H1 (cell line): ENCODE measurements at regions of chr15 and their contacts with region 1.

Region 1: DNA sequence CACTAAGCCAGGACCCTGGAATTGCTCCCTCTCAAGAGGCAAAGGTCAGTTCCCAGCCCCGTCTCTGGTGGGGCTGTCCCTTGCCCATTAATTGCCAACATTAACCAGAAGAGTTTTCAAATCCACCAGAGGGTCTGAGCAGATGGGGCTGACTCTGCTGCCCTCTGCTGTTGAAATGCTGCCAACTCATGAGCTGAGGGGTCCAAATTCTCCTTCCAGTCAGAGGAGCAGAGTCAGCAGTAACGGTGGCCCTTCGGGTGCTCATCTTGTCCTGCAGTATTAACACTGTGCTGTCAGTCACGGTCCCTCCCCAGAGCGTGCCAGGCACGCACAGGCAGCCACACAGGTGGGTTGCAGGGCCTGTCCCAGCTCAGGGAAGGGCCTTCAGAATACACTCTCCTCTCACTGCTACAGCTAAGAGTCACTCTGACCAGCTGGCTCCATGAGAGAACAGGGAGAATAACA is 10.7 kb upstream of the SPTBN5 start:
- DNase-seq: peak; percentile 50 to 87
- H3K4me3 ChIP-seq: no peak overlapping the region
- H3K27ac ChIP-seq: no peak overlapping the region
- H3K4me1 ChIP-seq: peaks cover 0 to 4% (median 2%) of the 10 kb centered on the region in 4 experiments; a peak in 1 of 7 replicates
- H3K27me3 ChIP-seq: no peaks in the 10 kb centered on the region; a peak in 1 of 7 replicates
- CTCF ChIP-seq: peak; percentile 84 to 97 (median 96)
- EP300 ChIP-seq: no peak
- POLR2A ChIP-seq: no peak
- RAD21 ChIP-seq: peak; percentile 93 to 96

Region 2: GRCh38 chr15:41832875-41833274 is 71.7 kb before region 1 on chr15:
- CTCF ChIA-PET with region 1: interaction called, 10 read pairs
- POLR2A ChIA-PET with region 1: no interaction called
- DNase-seq: no peak
- H3K4me3 ChIP-seq: no peak overlapping the region
- H3K27ac ChIP-seq: no peak overlapping the region
- H3K4me1 ChIP-seq: peaks cover 0 to 4% (median 2%) of the 10 kb centered on the region in 4 experiments; a peak in 3 of 7 replicates
- H3K27me3 ChIP-seq: no peaks in the 10 kb centered on the region
- CTCF ChIP-seq: no peak
- EP300 ChIP-seq: no peak
- POLR2A ChIP-seq: no peak
- RAD21 ChIP-seq: no peak

Region 3: DNA sequence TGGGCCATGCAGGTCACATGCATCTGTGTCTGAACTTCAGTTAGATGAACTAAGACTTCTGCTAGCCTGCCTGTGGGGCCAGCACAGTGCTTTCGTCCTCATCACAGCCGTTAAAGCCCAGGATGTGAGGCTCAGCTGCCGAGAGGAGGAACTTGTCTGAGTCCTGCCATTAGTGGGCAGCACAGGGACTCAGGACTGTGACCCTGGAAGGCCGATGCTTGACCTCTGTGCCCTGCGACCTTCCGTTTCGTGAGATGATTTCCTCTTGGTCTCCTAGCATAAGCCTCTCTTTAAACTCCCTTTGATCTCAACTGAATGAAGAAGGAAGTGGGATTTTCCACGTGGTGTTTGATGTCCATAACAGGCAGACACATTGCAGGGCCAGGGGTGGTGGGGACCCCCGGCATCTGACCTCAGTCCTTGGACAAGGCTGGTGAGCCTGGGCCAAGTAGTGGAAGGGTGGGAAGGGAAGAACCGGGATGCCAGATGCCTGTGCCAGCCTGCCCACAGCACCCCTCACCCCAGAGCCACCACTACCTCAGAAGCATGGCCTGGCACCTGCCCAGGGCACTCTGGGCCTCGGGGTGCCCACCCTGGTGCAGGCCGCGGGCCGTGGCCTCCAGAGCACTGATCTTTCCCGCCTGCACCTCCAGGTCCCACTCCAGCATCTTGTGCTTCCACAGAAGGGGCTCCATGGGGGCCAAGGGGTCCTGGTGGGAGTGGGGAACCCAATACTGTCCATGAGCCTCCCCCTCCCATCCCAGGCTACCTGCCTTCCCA is 44.3 kb before region 1 on chr15:
- CTCF ChIA-PET with region 1: interaction called, 49 read pairs
- POLR2A ChIA-PET with region 1: no interaction called
- DNase-seq: no peak
- H3K4me3 ChIP-seq: no peak overlapping the region
- H3K27ac ChIP-seq: no peak overlapping the region
- H3K4me1 ChIP-seq: peaks cover 0 to 13% (median 3%) of the 10 kb centered on the region in 4 experiments; a peak in 4 of 7 replicates
- H3K27me3 ChIP-seq: no peaks in the 10 kb centered on the region; a peak in 3 of 7 replicates
- CTCF ChIP-seq: peak in 1 of 3 experiments; percentile 42; a peak in 1 of 4 replicates
- EP300 ChIP-seq: no peak
- POLR2A ChIP-seq: no peak
- RAD21 ChIP-seq: peak in 1 of 2 experiments; percentile 32; a peak in 1 of 4 replicates

Region 4: DNA sequence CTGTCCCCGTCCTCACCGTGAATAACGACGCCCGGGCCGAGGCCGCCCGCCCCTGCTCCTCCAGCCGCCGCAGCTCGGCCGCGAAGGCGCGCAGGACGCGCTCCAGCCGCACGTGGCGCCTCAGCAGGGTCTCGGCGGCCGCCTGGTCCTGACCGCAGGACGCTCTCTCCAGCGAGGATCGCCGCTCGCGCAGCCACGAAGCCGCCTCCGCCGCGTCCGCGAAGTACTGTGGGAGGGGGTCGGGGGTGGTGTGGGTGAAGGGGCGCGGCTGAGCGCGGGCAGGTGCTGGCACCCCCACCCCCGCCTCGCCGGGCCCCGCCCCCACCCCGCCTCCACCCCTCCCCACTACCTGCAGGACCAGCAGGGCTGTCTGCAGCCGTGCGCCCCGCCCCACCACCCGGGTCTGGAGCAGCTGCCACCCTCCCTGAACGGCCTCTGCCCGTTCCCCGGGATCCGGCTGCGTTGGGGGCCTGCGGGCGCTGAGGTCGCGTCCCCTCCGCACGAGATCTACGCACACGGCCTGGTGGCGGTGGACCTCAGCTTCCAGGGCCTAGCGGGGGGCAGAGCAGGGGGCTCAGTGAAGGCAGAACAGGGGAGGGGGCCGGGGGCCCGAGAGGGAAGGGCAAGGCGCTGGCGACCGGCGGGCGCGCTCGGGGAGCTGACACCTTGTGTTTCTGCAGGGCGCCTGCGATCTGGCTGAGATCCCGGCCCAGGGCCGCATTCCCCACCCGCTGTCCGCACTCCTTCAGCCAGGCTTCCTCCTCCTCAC is 22.5 kb before region 1 on chr15:
- CTCF ChIA-PET with region 1: interaction called, 58 read pairs
- POLR2A ChIA-PET with region 1: no interaction called
- DNase-seq: peak in 1 of 2 experiments; percentile 78
- H3K4me3 ChIP-seq: peak overlapping the region; percentile 33 to 68 (median 35)
- H3K27ac ChIP-seq: no peak overlapping the region
- H3K4me1 ChIP-seq: peaks cover 0 to 9% (median 4%) of the 10 kb centered on the region in 4 experiments; a peak in 5 of 7 replicates
- H3K27me3 ChIP-seq: peaks cover 21 to 36% (median 31%) of the 10 kb centered on the region in 4 experiments
- CTCF ChIP-seq: no peak
- EP300 ChIP-seq: no peak
- POLR2A ChIP-seq: no peak
- RAD21 ChIP-seq: no peak

Region 5: GRCh38 chr15:41972253-41973242 is 68.0 kb after region 1 on chr15 and contains the start of gene EHD4:
- CTCF ChIA-PET with region 1: no interaction called
- POLR2A ChIA-PET with region 1: no interaction called
- DNase-seq: peak; percentile 94 to 95
- H3K4me3 ChIP-seq: peak within 1 kb of the TSS; percentile 75 to 100 (median 93)
- H3K27ac ChIP-seq: peak within 1 kb of the TSS; percentile 89
- H3K4me1 ChIP-seq: peaks cover 0 to 10% (median 5%) of the 10 kb centered on the region in 4 experiments; a peak in 3 of 7 replicates
- H3K27me3 ChIP-seq: no peaks in the 10 kb centered on the region
- CTCF ChIP-seq: peak in 2 of 3 experiments; percentile 39 to 42; a peak in 2 of 4 replicates
- EP300 ChIP-seq: no peak
- POLR2A ChIP-seq: peak; percentile 81 to 93
- RAD21 ChIP-seq: peak in 1 of 2 experiments; percentile 25; a peak in 1 of 4 replicates
- total RNA-seq, gene EHD4: 24.5 and 25.6 TPM in 2 replicates

Region 6: DNA sequence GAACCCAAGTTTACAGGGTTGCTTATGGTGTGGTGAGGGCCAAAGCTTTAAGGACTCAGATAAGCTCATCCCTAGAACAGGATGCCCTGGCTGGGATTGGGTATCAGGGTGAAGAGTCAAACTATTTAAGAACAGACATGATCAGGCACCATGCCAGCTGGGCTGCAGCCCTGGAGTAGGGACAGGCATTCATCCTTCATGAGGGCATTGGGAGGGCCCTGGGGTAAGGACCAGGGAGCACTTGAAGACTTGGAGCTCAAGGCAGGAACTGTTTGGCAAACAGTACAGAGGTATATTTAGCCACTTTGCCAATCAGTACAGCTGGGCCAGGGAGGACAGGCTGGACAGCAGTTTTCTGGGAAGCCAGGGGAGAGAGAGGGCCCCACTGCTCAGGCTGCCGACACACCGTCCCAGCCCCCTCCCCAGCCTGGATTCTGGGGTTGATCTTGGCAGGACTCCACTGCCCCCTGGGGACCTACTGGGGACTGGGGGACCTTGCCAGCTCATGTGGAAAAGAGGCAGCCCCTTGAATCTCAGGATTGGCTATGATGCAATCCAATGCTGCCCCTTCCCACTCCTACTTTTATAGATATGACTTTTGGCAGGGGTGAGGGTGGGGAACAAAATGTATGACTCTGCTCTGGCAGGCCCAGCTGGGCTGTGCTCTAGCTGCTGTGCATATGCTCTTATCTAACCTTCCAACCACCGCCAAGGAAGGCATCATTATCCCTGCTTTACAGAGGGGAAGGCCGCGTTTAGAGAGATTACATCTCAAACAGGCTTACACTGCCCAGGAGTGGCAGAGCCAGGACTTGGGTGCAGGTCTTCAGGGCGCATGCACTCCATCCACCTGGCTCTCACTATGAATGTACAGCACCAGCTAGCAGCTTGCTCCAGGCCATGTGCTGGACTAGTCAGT is 114.0 kb after region 1 on chr15:
- CTCF ChIA-PET with region 1: no interaction called
- POLR2A ChIA-PET with region 1: no interaction called
- DNase-seq: no peak
- H3K4me3 ChIP-seq: no peak overlapping the region
- H3K27ac ChIP-seq: no peak overlapping the region
- H3K4me1 ChIP-seq: no peaks in the 10 kb centered on the region
- H3K27me3 ChIP-seq: no peaks in the 10 kb centered on the region
- CTCF ChIP-seq: no peak
- EP300 ChIP-seq: no peak
- POLR2A ChIP-seq: no peak
- RAD21 ChIP-seq: no peak; a peak in 1 of 4 replicates